Cardiac septum (tissue), 1 donor: ENCODE measurements at regions of chr4 and their contacts with region 1.

Region 1: DNA sequence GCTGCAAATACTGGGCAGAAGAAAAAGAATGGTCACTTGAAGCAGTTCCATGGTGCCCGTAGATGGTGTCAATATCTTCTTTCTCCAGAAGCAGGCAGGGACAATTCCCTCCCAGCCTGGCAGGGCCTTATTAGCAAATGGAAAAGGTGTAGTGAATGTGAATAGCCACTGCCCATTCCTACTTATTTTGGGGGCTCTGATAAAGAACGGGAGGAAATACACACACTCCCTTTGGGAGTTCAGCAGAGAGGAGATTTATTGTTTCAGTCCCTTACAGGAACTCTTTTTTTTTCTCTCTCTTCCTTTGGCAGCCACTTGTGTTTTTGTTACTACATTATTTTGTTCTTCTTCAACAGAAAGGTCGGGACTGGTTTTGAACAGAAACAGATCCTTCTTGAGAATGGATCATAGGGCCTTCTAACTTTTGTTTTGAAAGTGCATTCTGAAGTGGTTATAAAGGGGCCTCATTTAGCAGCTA is at the start of gene EMCN:
- DNase-seq: no peak
- total RNA-seq, gene EMCN: 27.5 TPM

Region 2: DNA sequence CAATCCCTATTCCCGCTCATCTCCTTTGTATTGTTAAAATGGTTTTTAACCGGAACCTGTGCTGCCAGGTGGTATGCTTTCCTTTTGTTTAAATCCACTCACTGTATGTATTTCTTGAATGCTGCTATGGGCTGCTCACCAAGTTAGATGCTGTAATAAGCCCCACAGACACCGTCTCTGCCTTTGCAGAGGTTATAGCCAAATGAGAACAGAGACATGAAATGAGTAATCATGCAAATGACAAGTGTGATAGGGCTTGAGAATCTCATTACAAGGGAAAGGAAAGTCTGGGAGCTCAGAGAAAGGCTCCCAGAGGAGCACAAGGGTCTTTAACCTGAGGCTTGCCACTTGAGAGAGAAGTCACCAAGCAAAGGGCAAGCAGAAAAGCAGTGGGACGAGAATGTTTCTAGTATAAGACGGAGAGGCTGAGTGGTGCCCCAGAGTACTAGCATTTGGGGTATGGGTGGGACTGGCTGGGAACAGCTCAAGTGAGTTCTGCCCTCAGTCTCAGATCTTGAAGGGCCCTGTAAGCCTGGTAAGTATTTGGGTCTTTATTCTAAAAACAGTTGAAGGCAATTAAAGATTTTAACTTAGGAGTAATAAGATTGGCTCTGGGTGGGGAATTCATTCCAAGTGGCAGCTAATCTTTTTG is 457.0 kb before region 1 on chr4:
- intact Hi-C with region 1: no loop called
- DNase-seq: no peak

Region 3: GRCh38 chr4:100421361-100421978 is 96.4 kb before region 1 on chr4:
- intact Hi-C with region 1: loop called (anchors 5 kb)
- DNase-seq: no peak

Region 4: GRCh38 chr4:100591161-100591876 is 73.4 kb after region 1 on chr4:
- intact Hi-C with region 1: loop called (anchors 2 kb)
- DNase-seq: no peak

Region 5: GRCh38 chr4:100651499-100652175 is 133.7 kb after region 1 on chr4:
- intact Hi-C with region 1: loop called (anchors 5 kb)
- DNase-seq: no peak